A673 (cell line): ENCODE measurements at regions of chr21 and their contacts with region 1.

Region 1: DNA sequence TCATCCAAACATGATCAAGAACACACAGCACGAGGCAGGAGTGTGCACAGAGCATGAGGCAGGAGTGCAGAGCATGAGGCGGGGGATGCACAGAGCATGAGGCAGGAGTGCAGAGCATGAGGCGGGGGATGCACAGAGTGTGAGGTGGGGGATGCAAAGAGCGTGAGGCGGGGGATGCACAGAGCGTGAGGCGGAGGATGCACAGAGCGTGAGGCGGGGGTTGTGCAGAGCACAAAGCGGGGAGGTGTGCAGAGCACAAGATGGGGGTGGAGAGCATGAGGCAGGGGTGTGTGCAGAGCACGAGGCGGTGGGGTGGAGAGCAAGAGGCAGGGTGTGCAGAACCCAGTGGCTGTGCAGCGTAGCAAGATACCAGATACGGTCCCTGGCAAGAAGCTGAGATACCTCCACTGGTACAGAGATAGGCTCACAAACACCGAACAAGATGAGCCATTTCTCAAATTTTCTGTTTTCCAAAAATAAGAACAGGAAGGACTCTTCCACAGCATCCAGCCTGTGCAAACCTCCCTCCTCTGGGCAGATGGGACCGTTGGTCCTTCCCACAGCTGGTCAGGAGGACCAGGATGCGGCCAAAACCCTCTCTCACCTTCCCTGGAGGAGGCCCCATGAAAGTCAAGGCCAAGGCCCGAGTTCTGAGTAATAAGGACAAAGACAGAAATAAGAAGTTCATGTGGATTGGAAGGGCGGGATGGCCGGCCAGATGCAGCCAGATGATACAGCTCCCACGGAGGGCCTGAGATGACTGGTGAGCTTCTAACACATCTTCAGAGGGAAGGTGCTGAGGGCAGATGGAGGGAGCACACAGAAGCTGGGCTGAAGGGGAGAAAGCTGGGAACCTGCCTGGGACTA is 12.0 kb downstream of the SPATC1L start:
- DNase-seq: no peak
- H3K4me3 ChIP-seq: no peak overlapping the region
- H3K27ac ChIP-seq: no peak overlapping the region
- H3K4me1 ChIP-seq: no peaks in the 10 kb centered on the region
- H3K27me3 ChIP-seq: no peaks in the 10 kb centered on the region
- CTCF ChIP-seq: no peak

Region 2: GRCh38 chr21:46159841-46160656 is 12.2 kb before region 1 on chr21:
- CTCF ChIA-PET with region 1: interaction called, 3 read pairs
- POLR2A ChIA-PET with region 1: no interaction called
- intact Hi-C with region 1: loop called (anchors 2 kb)
- DNase-seq: no peak
- H3K4me3 ChIP-seq: no peak overlapping the region
- H3K27ac ChIP-seq: no peak overlapping the region
- H3K4me1 ChIP-seq: no peaks in the 10 kb centered on the region
- H3K27me3 ChIP-seq: no peaks in the 10 kb centered on the region
- CTCF ChIP-seq: no peak